ENCODE measurements at regions of chr20 and their contacts with region 1.

Region 1: GRCh38 chr20:13755809-13756208 is 28.9 kb downstream of the ESF1 start:
- DNase-seq: no peak
- H3K4me3 ChIP-seq: no peak overlapping the region
- H3K27ac ChIP-seq: no peak overlapping the region
- H3K4me1 ChIP-seq: peaks cover 11% of the 10 kb centered on the region
- H3K27me3 ChIP-seq: no peaks in the 10 kb centered on the region
- CTCF ChIP-seq: no peak

Region 2: DNA sequence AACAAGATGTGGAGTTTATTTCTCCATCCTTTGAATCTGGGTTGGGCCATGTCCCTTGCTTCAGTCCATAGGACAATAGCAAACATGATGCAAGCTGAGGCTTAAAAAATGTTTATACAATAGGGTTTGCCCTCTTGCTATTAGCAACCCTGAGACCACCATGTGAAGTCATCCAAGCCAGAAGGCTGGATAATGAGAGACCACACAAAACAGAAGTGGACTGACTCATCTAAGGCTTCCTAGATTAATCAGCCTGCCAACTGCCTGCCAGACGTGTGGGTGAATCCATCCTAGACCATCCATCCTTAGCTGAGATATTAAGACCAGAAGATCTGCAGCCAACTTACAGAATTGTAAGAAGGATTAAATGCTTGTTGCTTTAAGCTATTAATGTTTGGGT is 572.8 kb before region 1 on chr20:
- CTCF ChIA-PET with region 1: no interaction called
- dilution Hi-C with region 1: no loop called
- in situ Hi-C with region 1: no loop called
- intact Hi-C with region 1: no loop called
- DNase-seq: no peak
- H3K4me3 ChIP-seq: no peak overlapping the region
- H3K27ac ChIP-seq: no peak overlapping the region
- H3K4me1 ChIP-seq: no peaks in the 10 kb centered on the region
- H3K27me3 ChIP-seq: no peaks in the 10 kb centered on the region
- CTCF ChIP-seq: no peak

Region 3: DNA sequence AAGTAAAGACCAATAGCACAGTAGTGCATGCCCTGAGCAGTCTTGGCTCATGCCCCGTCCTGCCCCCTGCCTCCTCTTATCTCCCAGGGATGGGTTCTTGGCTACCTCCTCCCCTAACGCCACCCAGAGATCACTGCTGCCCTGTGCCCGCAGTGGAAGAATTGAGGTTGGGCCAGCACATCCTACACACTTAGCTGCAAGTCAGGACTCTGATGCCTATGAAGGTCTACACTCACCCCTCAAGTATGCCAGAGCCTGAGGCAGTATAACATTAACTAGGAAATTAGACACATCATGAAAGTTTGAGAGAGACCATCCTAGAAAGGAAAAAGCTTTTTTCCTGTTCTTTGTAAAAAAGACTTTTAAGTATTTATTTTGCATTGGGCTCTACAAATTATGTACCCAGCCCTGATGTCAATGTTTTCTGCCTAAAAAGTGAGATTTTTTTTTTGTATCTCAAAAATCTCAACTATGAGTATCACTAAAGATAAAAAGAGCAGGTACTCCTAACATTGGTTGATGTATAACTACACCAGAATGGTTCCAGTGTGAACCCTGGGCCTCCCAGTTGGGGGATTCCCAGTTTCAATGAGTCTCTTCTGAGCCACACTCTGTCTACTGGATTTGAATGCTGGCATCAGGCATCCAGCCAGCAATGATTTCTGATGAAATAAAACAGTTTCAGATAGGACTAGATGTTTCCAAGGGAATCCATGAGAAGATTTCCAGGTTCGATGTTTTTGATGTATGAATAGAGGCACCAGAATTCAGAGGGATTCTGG is 419.3 kb before region 1 on chr20:
- CTCF ChIA-PET with region 1: no interaction called
- dilution Hi-C with region 1: no loop called
- in situ Hi-C with region 1: no loop called
- intact Hi-C with region 1: loop called (anchors 10 kb)
- DNase-seq: peak; percentile 78
- H3K4me3 ChIP-seq: no peak overlapping the region
- H3K27ac ChIP-seq: peak overlapping the region; percentile 51
- H3K4me1 ChIP-seq: peaks cover 29% of the 10 kb centered on the region
- H3K27me3 ChIP-seq: no peaks in the 10 kb centered on the region
- CTCF ChIP-seq: no peak

Measured in mammary epithelial cell (primary cell).